ENCODE measurements at regions of chr9 and their contacts with region 1.

Region 1: GRCh38 chr9:129177791-129178559 is at the start of gene IER5L:
- DNase-seq: peak; percentile 99
- H3K4me3 ChIP-seq: peak within 1 kb of the TSS; percentile 90 to 98
- H3K27ac ChIP-seq: peak within 1 kb of the TSS; percentile 96 to 97
- H3K4me1 ChIP-seq: peaks cover 14 to 19% of the 10 kb centered on the region in 2 experiments; a peak in 3 of 4 replicates
- H3K27me3 ChIP-seq: no peaks in the 10 kb centered on the region
- CTCF ChIP-seq: peak; percentile 18; the same call in 1 of the 2 replicates
- EP300 ChIP-seq: no peak; a peak in 1 of 4 replicates
- RAD21 ChIP-seq: no peak; the same call in 1 of the 2 replicates
- polyA plus RNA-seq, gene IER5L: 8.9 and 16.2 TPM in 2 replicates

Region 2: DNA sequence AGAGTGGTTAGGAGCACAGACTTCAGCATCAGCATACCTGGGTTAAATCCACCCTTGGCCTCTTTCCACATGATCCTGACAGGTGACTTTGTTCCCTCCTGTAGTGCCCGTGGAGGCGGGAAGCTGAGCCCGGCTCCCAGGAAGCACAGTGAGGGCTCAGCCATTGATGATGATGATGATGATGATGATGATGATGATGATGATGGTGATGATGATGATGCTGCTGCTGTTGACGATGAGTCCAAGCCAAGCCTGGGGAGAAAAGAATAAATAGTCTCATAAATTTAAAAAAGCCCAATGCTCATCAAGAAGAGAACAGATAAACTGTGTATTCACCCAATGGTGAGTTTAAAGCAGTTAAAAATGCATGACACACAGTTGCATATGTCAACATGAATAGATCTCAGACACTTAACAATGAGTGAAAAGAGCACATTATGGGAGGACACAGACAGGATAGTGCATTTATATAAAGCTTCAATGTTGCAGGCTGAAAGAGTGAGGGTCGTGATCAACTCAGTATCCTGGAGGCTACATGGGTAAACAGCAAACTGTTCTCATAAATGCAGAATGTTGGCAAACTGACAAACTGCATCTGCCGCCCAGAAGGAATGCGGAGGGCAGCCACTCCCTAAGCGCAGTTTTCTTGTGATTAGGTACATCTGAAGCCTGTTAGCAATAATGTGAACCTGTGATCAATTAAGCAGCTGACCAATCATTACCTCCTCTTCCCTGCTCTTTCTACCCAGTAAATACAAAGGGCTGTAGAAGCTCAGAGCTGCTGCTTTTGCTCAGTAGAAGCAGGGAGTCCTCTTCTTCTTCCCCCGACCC is 1482.9 kb before region 1 on chr9:
- CTCF ChIA-PET with region 1: no interaction called
- POLR2A ChIA-PET with region 1: no interaction called
- DNase-seq: no peak
- H3K4me3 ChIP-seq: no peak overlapping the region
- H3K27ac ChIP-seq: peak overlapping the region in 1 of 2 experiments; percentile 48; a peak in 2 of 4 replicates
- H3K4me1 ChIP-seq: peaks cover 0 to 8% of the 10 kb centered on the region in 2 experiments; a peak in 1 of 4 replicates
- H3K27me3 ChIP-seq: no peaks in the 10 kb centered on the region
- CTCF ChIP-seq: no peak
- EP300 ChIP-seq: no peak
- RAD21 ChIP-seq: no peak

Region 3: DNA sequence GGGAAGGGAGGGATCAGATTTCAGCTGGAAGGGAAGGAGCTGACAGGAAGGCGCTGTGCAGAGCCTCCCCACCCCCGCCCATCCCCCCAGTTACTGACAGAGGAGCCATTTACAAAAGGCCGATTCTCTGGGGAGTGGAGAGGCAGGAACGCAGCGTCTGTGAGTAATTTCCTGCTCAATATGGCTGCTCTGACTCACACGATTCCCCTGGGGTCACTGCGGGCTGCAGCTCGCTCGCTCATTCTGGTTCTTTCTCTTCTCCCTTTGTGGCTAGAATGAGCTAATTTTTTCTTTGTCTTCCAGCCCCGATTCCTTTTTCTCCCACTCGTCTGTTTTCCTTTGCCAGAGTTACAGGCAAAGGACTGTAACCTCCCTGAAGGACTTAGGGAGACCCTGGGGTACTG is 38.0 kb before region 1 on chr9:
- CTCF ChIA-PET with region 1: interaction called, 193 read pairs
- POLR2A ChIA-PET with region 1: interaction called, 7 read pairs
- DNase-seq: peak; percentile 75
- H3K4me3 ChIP-seq: peak overlapping the region; percentile 50 to 53
- H3K27ac ChIP-seq: peak overlapping the region; percentile 99 to 100
- H3K4me1 ChIP-seq: peaks cover 43 to 55% of the 10 kb centered on the region in 2 experiments; a peak in 3 of 4 replicates
- H3K27me3 ChIP-seq: no peaks in the 10 kb centered on the region
- CTCF ChIP-seq: no peak
- EP300 ChIP-seq: peak; percentile 61 to 96
- RAD21 ChIP-seq: peak; percentile 29

Region 4: DNA sequence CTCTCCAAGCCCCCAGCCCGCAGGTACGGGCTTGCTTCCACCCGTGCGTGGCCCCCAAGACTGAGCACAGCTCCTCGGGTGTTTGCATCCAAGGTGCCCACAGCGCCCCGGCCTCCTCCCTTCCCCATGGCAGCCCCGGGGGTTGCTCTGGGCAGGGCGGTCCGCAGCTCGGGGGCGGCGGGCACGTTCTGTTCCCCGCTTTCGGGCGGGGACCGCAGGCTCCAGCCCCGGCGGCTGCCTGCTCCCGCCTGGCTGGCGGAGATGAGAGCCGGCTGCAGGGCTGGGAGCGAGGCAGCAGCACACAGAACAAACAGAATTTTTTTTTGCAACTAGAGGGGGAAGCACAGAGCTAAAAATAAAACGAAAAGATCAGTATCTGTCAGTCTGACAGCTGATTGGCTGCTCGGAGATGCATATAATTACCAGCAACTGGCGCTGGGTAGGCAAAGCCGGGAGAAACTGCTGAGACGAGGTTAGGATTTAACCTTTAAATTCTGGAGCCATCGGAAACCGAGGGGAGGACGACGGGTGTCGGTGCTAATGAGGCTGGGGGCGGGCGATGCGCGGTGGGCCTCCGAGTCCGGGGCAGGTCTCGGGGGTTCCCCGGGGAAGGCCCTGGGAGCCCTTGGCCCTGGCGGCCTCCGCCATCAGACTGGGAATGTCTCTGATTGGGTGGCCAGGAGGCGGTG is 142.7 kb after region 1 on chr9:
- CTCF ChIA-PET with region 1: interaction called, 9 read pairs
- POLR2A ChIA-PET with region 1: interaction called, 17 read pairs
- DNase-seq: peak; percentile 89
- H3K4me3 ChIP-seq: peak overlapping the region; percentile 40 to 62
- H3K27ac ChIP-seq: peak overlapping the region; percentile 85 to 95
- H3K4me1 ChIP-seq: peaks cover 20 to 39% of the 10 kb centered on the region in 2 experiments; a peak in 3 of 4 replicates
- H3K27me3 ChIP-seq: no peaks in the 10 kb centered on the region
- CTCF ChIP-seq: peak; percentile 33
- EP300 ChIP-seq: peak in 1 of 2 experiments; percentile 45; a peak in 2 of 4 replicates
- RAD21 ChIP-seq: peak; percentile 66

Region 5: GRCh38 chr9:129436751-129437625 is 259.0 kb after region 1 on chr9:
- CTCF ChIA-PET with region 1: interaction called, 7 read pairs
- POLR2A ChIA-PET with region 1: interaction called, 12 read pairs
- DNase-seq: peak; percentile 88
- H3K4me3 ChIP-seq: peak overlapping the region; percentile 51 to 70
- H3K27ac ChIP-seq: peak overlapping the region in 1 of 2 experiments; percentile 64; a peak in 3 of 4 replicates
- H3K4me1 ChIP-seq: peaks cover 0 to 26% of the 10 kb centered on the region in 2 experiments; a peak in 1 of 4 replicates
- H3K27me3 ChIP-seq: no peaks in the 10 kb centered on the region
- CTCF ChIP-seq: no peak
- EP300 ChIP-seq: 0 out of 4 replicates have a peak, but pooled peaks of 1 of the 2 experiments have one; percentile 17
- RAD21 ChIP-seq: no peak; the same call in 1 of the 2 replicates

Region 6: DNA sequence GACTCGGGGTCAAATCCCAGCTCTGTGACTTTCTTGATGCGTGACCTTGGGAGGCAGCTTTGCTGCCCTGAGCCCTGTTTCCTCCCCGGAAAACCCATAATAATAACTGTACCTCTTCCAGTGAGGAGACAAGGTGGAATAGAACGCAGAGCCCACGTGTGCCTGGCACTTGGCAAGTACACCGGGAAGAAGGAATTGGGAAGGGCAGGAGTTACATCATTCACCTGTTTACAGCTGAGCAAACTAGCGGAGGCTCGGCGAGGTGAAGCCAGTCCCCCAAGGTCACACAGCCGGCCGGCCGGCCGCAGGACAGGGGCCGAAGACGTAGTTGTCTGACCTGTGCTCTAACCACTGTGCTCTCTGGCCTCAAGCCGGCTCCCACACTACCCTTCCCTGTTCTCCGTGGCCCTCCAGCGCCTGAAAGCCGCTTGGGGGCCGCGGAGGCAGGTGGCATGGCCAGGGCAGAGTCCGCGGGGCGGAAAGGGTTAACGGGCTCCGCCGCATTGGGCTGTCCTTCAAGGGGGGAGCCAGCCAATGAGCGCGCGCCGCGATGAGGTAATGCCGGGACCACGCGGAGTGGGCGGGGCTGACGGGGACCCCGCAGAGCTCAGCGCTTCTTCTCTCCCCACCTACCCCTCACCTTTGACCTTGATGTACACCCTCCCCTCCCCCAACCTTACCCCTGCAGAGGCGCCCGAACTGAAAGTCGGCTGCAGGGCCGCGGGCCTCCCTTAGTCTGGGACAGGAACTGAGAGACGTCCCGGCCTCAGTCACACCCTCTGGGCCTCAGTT is 317.8 kb after region 1 on chr9:
- CTCF ChIA-PET with region 1: interaction called, 31 read pairs
- POLR2A ChIA-PET with region 1: interaction called, 37 read pairs
- DNase-seq: peak; percentile 98
- H3K4me3 ChIP-seq: peak overlapping the region; percentile 52 to 70
- H3K27ac ChIP-seq: peak overlapping the region; percentile 96 to 99
- H3K4me1 ChIP-seq: peaks cover 43 to 74% of the 10 kb centered on the region in 2 experiments; a peak in 3 of 4 replicates
- H3K27me3 ChIP-seq: no peaks in the 10 kb centered on the region
- CTCF ChIP-seq: no peak
- EP300 ChIP-seq: peak in 1 of 2 experiments; percentile 42; a peak in 2 of 4 replicates
- RAD21 ChIP-seq: no peak

Region 7: DNA sequence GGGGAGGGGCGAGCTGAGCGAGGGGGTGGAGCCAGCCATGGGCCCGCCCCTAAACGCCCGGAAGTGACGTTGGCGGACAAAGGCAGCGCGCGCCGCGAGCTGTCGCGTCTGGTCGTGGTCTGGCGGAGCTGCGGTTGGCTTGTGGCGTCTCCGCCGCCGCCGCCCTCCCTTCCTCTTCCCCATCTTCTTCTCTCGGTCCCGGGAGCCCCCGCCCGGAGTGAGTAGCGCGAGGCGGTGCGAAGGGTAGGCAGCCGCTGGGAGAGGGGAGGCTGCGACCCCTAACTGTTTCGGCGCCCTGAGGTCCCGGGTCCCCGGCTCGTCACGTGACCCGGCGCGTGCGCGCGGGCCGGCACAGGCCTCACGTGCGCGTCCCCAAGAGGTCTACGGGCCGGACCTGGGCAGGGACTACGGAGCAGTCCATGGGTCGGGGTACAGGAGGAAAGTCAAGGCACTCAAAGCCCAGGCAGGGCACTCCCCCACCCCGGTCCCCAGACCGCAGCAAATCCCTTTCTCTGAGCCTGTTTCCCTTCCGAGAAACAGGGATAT is 448.2 kb after region 1 on chr9 and contains the start of gene NTMT1:
- CTCF ChIA-PET with region 1: interaction called, 26 read pairs
- POLR2A ChIA-PET with region 1: interaction called, 8 read pairs
- DNase-seq: peak; percentile 95
- H3K4me3 ChIP-seq: peak within 1 kb of the TSS; percentile 87 to 92
- H3K27ac ChIP-seq: peak within 1 kb of the TSS; percentile 78 to 83
- H3K4me1 ChIP-seq: peaks cover 16 to 29% of the 10 kb centered on the region in 2 experiments; a peak in 2 of 4 replicates
- H3K27me3 ChIP-seq: no peaks in the 10 kb centered on the region
- CTCF ChIP-seq: no peak
- EP300 ChIP-seq: no peak
- RAD21 ChIP-seq: no peak
- polyA plus RNA-seq, gene NTMT1: 75.0 and 78.3 TPM in 2 replicates

Measured in SK-N-SH (cell line).